ENCODE measurements at regions of chr2 and their contacts with region 1.

Region 1: DNA sequence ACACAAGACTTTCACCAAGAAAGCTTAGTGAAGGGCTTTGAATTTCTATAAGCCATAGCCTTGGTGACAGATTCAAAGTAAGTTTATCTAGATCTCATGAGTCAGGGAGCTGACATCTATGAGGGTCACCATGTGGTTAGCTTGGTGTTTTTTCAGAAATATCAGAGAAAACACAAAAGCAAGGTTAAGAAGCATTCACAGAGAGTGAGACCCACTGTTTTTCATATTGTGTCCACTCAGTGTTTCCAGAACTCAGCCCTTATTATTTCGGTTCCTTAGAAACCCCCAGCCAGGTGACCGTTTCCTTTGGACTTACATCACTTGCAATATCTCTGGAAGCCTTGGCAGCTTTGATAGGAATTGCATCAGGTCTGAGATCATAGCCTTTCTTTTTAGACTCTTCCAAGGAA is 76.6 kb downstream of the NEB start:
- DNase-seq: no peak
- H3K4me3 ChIP-seq: no peak overlapping the region
- H3K27me3 ChIP-seq: no peaks in the 10 kb centered on the region
- CTCF ChIP-seq: no peak

Region 2: GRCh38 chr2:151381291-151381874 is 276.3 kb before region 1 on chr2:
- CTCF ChIA-PET with region 1: no interaction called
- POLR2A ChIA-PET with region 1: interaction called, 11 read pairs
- DNase-seq: no peak
- H3K4me3 ChIP-seq: no peak overlapping the region
- H3K27me3 ChIP-seq: no peaks in the 10 kb centered on the region
- CTCF ChIP-seq: no peak

Measured in BJ (cell line).